ENCODE measurements at regions of chr2 and their contacts with region 1.

Region 1: GRCh38 chr2:197137231-197137630 is 173.3 kb downstream of the ANKRD44 start:
- DNase-seq: no peak
- H3K4me3 ChIP-seq: no peak overlapping the region
- H3K4me3 Mint-ChIP-seq: peak overlapping the region in 5 of 8 donors; percentile 35 to 77 (median 54)
- H3K27ac ChIP-seq: peak overlapping the region; percentile 6
- H3K27ac Mint-ChIP-seq: peak overlapping the region; percentile 71 to 88 (median 85)
- H3K4me1 ChIP-seq: peaks cover 92% of the 10 kb centered on the region
- H3K4me1 Mint-ChIP-seq: peaks cover 73 to 96% (median 84%) of the 10 kb centered on the region in 4 donors
- H3K27me3 ChIP-seq: no peaks in the 10 kb centered on the region
- H3K27me3 Mint-ChIP-seq: no peaks in the 10 kb centered on the region

Region 2: GRCh38 chr2:195998070-195998469 is 1139.2 kb before region 1 on chr2:
- CTCF ChIA-PET with region 1: no interaction called
- POLR2A ChIA-PET with region 1: no interaction called
- intact Hi-C with region 1: no loop called
- DNase-seq: no peak
- H3K4me3 ChIP-seq: no peak overlapping the region
- H3K4me3 Mint-ChIP-seq: no peak overlapping the region
- H3K27ac ChIP-seq: no peak overlapping the region
- H3K27ac Mint-ChIP-seq: no peak overlapping the region
- H3K4me1 ChIP-seq: no peaks in the 10 kb centered on the region
- H3K4me1 Mint-ChIP-seq: peaks cover 0 to 1% (median 0%) of the 10 kb centered on the region in 4 donors
- H3K27me3 ChIP-seq: no peaks in the 10 kb centered on the region
- H3K27me3 Mint-ChIP-seq: peaks cover 0 to 6% of the 10 kb centered on the region in 2 donors

Region 3: GRCh38 chr2:197124639-197125390 is 12.4 kb before region 1 on chr2:
- CTCF ChIA-PET with region 1: interaction called, 10 read pairs
- POLR2A ChIA-PET with region 1: interaction called, 19 read pairs
- intact Hi-C with region 1: no loop called
- DNase-seq: no peak
- H3K4me3 ChIP-seq: no peak overlapping the region
- H3K4me3 Mint-ChIP-seq: no peak overlapping the region
- H3K27ac ChIP-seq: no peak overlapping the region
- H3K27ac Mint-ChIP-seq: peak overlapping the region in 3 of 7 donors; percentile 11 to 75 (median 55)
- H3K4me1 ChIP-seq: peaks cover 48% of the 10 kb centered on the region
- H3K4me1 Mint-ChIP-seq: peaks cover 35 to 73% (median 52%) of the 10 kb centered on the region in 4 donors
- H3K27me3 ChIP-seq: no peaks in the 10 kb centered on the region
- H3K27me3 Mint-ChIP-seq: no peaks in the 10 kb centered on the region

Region 4: GRCh38 chr2:197322724-197323720 is 185.8 kb after region 1 on chr2:
- CTCF ChIA-PET with region 1: no interaction called
- POLR2A ChIA-PET with region 1: interaction called, 3 read pairs
- intact Hi-C with region 1: loop called (anchors 5 kb)
- DNase-seq: peak in 3 of 5 donors; percentile 36 to 41 (median 36)
- H3K4me3 ChIP-seq: peak overlapping the region; percentile 44 to 48
- H3K4me3 Mint-ChIP-seq: peak overlapping the region; percentile 49 to 86 (median 76)
- H3K27ac ChIP-seq: peak overlapping the region; percentile 36
- H3K27ac Mint-ChIP-seq: peak overlapping the region; percentile 82 to 97 (median 94)
- H3K4me1 ChIP-seq: peaks cover 67% of the 10 kb centered on the region
- H3K4me1 Mint-ChIP-seq: peaks cover 40 to 71% (median 61%) of the 10 kb centered on the region in 4 donors
- H3K27me3 ChIP-seq: no peaks in the 10 kb centered on the region
- H3K27me3 Mint-ChIP-seq: no peaks in the 10 kb centered on the region

Measured in CD4-positive, alpha-beta memory T cell (primary cell).